GM13977 (cell line): ENCODE measurements at regions of chr4 and their contacts with region 1.

Region 1: DNA sequence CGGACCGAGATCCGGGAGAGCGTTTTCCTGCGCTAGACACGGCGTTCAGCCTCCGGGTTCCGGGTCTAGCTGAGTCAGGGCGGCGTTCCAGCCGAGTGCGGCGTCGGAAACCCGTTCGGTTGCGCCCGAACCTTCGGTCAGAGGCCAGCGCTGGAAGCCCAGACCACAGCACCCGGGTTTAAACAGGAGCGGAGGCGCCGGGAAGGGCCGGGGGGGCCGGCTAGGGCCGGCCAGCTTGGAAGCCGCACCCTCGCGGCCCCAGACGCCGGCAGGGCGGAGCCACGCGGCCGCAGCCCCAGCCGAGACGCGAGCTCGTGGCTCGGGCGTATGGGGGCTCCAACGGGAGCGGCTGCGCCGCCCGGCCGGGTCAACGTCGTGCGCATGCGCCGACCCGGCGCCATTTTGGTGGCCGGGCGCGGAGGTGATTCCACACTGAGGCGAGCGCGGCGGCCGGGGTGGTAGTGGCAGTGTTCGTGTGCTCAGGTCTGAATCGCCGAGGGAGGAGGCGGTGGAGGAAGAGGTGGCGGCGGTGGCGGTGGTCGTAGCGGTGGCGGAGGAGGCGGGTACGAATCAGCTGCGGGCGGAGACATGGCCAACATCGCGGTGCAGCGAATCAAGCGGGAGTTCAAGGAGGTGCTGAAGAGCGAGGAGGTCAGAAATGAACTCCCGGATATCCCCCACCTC is at the start of gene UBE2K:
- DNase-seq: peak; percentile 95
- CTCF ChIP-seq: peak; percentile 6

Region 2: DNA sequence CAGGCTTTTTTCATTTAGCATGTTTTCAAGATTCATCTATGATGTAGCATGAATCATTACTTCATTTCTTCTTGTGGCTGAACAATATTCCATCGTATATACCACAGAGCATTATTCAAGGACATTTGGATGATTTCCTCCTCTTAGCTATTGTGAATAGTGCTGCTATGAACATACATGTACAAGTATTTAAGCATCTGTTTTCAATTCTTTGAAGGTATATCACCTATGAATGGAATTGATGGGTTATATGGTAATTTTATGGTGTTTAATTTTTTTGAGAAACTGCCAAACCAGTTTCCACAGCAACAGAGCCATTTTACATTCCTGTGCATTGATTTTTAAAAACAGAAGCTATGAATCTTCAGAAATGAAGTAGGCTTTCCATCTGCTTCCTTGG is 551.7 kb before region 1 on chr4:
- in situ Hi-C with region 1: no loop called
- DNase-seq: no peak
- CTCF ChIP-seq: no peak

Region 3: DNA sequence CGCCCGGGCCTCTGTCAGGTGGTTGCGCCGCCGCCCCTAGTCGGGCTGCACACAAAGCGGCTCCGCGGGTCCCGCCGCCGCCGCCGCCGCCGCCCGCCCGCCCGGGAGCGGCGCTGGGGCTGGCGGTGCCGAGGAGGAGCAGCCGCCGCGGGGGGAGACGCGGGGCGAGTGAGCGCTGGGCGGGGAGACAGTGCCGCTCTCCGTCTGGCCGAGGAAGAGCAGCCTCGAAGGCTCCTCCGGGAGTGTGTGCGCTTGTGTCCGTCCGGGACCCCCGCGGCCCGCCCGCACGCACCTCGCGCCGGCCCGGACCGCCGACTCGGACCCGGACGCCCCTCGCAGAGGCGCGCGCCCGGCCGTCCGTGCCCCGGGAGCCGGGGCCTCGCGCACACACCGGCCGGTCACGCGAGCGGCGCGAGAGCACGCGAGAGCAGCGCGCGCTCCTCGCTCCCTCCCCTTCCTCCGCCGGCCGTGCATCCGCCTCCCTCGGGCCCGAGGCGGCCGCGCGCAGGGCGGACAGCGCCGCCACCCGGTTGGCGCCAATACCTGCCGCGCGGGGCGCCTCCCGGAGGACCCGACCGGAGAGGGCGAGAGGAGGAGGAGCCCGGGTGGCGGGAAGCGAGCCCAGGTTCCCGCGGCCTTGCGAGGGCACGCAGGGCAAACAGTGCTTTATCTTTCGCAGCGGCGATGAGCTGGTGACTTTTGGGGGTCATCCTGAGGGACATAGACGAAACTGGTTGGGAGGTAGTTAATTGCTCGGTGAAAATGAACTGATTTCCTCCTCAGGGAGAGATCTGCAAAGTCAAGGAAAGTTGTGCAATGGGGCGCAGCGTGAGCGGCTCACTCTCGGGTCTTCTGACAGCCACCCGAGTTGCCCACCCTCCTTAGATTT is 279.9 kb after region 1 on chr4 and contains the start of gene PDS5A:
- in situ Hi-C with region 1: loop called (anchors 10 kb)
- DNase-seq: peak; percentile 97
- CTCF ChIP-seq: peak; percentile 96

Region 4: DNA sequence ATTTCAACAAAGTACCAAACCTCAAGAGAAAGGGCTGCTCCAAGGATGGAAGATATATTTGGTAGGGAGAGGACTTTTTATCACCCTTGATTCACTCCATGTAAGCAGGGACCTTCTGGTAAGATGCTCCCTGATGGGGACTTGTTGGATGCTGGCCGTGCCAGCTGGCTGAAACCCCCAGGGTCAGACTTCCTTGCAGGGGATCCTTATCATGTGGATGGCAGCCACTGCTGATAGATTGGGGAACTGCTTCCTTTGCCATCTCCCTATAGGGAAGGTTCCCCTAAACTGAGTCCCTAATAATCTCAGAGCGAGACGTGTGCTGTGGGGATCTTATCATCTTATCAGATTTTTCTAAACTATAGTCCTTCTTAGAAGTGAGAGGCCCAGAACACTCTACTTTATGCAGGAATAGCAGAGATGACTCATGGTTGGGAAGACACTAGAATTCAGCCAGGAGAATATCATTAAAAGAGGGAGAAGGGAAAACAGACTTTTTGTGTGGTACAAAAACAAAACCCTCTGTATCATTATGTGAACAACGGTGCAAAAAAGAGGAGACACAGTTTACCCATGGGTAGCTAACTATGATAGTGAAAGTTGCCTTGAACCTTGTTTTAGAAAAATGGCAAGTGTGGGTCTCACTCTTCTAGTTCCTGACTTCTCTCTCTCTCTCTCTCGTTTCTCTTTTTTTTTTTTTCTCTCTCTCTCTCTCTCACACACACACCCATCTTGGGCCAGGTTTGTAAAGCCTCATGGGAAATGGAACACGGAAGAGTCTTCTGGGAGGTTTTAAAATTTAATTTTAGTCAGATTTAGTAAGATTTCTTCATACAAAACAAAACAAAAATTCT is 515.0 kb after region 1 on chr4:
- in situ Hi-C with region 1: no loop called
- DNase-seq: no peak
- CTCF ChIP-seq: no peak

Region 5: DNA sequence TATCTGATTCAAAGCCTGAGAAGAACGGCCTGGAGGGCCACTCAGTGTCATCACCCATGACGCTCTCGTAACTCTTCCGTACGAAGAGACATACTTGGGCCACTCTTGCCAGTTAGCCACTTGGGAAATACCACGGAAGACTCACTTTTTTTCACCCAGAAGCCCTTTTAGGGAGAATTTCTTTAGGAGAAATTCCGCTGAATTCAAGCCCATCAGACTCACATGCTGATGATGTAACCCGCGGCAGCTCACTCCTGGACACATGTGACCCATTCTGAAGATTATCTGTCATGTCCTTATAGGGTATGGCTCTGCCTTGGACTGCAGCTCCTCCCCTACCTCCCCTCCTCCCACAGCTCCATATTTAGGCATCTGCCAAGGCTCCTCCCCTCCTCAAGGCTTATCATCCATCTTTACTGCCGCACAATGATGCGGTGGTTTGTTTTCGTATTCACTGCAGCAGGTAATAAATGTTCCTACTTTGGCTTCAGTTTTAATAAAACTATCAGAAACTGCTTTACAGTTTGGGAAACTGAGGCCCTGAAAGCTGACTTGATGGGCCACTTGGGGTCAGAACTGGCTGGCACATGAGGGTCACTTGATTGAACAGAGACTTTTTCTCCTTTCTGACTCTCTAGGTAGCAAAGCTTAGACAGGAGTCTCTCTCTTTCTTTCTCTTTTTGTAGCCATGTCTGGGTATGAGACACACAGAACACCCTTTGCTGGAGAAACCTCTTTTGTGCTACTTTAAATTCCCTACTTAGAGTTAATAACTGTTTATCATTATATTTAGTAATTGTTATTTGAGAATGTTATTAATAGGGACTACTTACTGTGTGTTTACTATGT is 541.0 kb after region 1 on chr4:
- in situ Hi-C with region 1: no loop called
- DNase-seq: no peak
- CTCF ChIP-seq: no peak